Tibial artery (tissue), 4 donors: ENCODE measurements at regions of chr15 and their contacts with region 1.

Region 1: DNA sequence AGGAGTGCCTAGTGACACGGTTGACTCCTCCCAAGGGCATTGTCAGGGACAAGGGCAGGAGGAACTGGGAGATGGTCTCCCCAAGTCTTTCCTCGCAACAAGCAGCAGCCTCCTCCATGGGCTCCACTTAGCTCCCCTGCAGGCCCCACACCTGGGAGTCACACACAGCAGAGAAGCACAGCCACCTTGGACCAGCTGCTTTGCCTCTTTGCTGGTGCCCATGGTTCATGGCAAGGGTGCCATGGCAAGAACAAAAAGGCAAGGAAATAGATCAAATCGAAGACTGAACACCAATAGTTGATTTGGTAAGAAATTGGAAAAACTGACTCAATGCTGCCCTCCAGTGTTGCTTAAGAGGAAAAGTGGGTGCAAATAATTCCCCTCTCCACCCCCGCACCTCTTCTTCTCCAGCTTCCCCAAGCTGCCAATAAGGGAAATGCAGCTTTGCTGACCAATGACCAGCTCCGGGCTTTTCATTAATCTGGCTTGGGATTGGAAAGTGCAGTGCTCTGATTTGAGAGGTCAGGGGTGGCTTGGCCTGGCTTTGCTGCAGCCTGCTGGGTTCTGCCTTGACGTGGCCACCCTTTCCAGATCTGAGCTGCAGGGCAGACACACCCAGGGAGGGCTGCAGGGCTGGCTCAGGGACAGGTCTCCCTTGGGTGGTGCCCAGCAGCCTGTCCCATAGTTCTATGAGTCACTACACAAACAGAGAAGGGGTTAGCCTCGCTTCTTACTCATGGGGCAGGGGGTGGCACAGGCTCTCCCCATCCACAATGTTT is 162.0 kb downstream of the KLF13 start:
- DNase-seq: peak; percentile 58 to 91
- H3K4me3 ChIP-seq: no peak overlapping the region
- H3K27ac ChIP-seq: peak overlapping the region; percentile 61 to 72
- H3K4me1 ChIP-seq: peaks cover 0 to 27% (median 24%) of the 10 kb centered on the region in 4 donors
- H3K27me3 ChIP-seq: no peaks in the 10 kb centered on the region
- CTCF ChIP-seq: peak; percentile 91 to 94

Region 2: DNA sequence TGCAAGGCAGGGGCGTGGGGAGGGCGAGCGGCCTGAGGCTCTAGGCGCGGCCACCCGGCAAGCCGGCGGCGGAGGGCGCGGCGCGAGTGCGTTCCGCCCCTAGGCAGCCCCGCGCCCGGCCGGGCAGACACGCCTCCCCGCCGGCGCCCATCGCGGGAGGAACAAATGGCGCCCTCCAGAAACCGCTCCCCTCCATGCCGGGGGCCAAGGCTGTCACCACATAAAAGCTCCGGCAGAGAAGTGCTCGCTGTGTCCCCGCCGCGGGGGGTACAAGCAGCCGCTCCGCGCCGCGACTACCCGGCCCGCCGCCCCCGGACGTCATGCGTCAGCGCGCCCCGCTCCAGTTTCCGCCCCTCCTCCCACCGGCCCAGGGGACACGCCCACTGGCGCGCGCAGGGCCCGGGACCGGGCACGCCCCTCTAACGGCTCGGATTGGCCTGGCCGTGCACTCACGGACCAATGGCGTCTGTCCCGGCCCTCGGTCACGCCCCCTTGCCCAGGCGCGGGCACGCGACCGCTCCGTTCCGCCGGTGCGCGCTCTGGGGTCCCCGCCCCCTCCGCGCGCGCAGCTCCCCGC is 162.4 kb before region 1 on chr15:
- intact Hi-C with region 1: loop called (anchors 1 kb)
- DNase-seq: peak; percentile 96 to 99
- H3K4me3 ChIP-seq: peak overlapping the region; percentile 66 to 89
- H3K27ac ChIP-seq: peak overlapping the region; percentile 91 to 98
- H3K4me1 ChIP-seq: peaks cover 0 to 37% (median 24%) of the 10 kb centered on the region in 4 donors
- H3K27me3 ChIP-seq: no peaks in the 10 kb centered on the region
- CTCF ChIP-seq: no peak

Region 3: DNA sequence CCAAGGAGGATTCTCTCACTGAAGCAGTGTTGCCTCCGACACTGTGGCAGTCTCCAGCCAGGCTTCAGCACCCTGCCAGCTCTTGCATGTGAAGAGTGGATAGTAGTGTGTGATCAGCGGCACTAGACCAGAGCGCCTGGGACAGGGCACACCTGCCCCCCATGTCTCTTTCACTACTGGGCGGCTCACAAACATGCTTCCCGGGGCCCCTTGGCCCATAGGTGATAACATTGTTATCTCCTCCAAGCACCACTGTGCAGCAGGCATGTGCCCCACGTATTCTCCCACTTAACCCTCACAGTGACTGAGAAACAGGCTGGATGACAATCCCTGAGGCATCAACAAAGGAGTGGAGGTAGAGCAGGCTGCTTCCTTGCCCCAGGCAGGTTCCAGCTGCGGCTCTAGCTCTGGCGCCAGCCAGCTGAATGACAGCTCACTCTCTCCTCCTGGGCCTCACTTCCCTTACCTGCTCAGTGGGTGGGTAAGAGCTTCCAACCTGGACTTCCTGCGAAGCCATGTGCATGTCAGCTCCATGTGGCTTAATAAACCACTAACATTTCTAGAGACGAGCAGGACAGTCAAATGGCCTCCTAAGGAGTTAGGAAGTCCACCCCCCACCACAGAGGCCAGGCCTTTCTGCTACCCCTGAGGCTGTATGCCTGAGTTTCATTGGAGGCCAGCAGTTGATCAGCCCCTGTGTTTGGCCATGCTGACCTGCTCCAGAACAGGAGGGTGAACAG is 124.1 kb before region 1 on chr15:
- intact Hi-C with region 1: loop called (anchors 1 kb)
- DNase-seq: peak in 1 of 2 donors; percentile 65
- H3K4me3 ChIP-seq: no peak overlapping the region
- H3K27ac ChIP-seq: peak overlapping the region; percentile 79 to 80
- H3K4me1 ChIP-seq: peaks cover 0 to 82% (median 48%) of the 10 kb centered on the region in 4 donors
- H3K27me3 ChIP-seq: no peaks in the 10 kb centered on the region
- CTCF ChIP-seq: no peak